A549 (cell line): ENCODE measurements at regions of chr5 and their contacts with region 1.

Region 1: GRCh38 chr5:73215891-73216610 is 43.1 kb downstream of the TMEM174 start:
- DNase-seq: peak; percentile 87 to 89
- ATAC-seq: peak; percentile 93 to 97
- H3K4me3 ChIP-seq: peak overlapping the region; percentile 47
- H3K27ac ChIP-seq: peak overlapping the region; percentile 91 to 96
- H3K4me1 ChIP-seq: peaks cover 16% of the 10 kb centered on the region; the same call in 2 of the 3 replicates
- CTCF ChIP-seq: peak; percentile 82
- EP300 ChIP-seq: no peak
- POLR2A ChIP-seq: peak; percentile 56
- RAD21 ChIP-seq: peak; percentile 60 to 79

Region 2: GRCh38 chr5:72752909-72753308 is 463.1 kb before region 1 on chr5:
- CTCF ChIA-PET with region 1: no interaction called
- POLR2A ChIA-PET with region 1: no interaction called
- DNase-seq: no peak
- ATAC-seq: peak in 1 of 2 experiments; percentile 56; a peak in 2 of 6 replicates
- H3K4me3 ChIP-seq: no peak overlapping the region
- H3K27ac ChIP-seq: no peak overlapping the region
- H3K4me1 ChIP-seq: no peaks in the 10 kb centered on the region
- CTCF ChIP-seq: no peak
- EP300 ChIP-seq: no peak
- POLR2A ChIP-seq: no peak
- RAD21 ChIP-seq: peak; percentile 21 to 34; a peak in 1 of 5 replicates

Region 3: DNA sequence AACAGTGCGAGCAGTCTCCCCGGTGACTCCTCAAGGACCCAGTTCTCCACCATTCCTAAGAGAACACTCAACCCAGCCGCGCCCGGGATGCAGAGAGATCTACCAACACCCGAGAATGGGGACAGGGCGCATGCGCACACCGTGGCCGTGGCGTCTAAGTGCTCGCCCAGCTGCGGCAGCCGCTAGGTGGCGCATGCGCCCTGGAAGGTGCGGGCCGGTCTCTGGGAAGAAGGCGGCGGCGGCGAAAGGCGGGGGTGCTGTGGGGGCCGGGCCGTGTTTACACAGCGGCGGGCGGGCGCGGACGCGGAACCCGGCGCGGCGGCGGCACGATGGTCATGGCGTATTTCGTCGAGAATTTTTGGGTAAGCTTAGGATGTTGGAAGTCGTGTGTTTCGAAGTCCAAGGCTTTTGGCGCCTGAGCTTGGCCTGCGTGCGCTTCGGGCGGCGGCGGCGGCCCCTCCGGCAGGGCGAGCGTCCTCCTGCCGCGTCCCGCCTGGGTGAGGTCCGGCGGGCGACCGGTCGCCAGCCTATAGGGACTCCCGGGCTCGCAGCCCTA is 260.2 kb before region 1 on chr5 and contains the start of gene FCHO2:
- CTCF ChIA-PET with region 1: interaction called, 13 read pairs
- POLR2A ChIA-PET with region 1: interaction called, 9 read pairs
- DNase-seq: peak; percentile 95 to 97
- ATAC-seq: peak; percentile 85 to 93
- H3K4me3 ChIP-seq: peak within 1 kb of the TSS; percentile 94
- H3K27ac ChIP-seq: peak within 1 kb of the TSS; percentile 96 to 97
- H3K4me1 ChIP-seq: peaks cover 49% of the 10 kb centered on the region
- CTCF ChIP-seq: peak; percentile 79
- EP300 ChIP-seq: no peak
- POLR2A ChIP-seq: peak; percentile 70
- RAD21 ChIP-seq: peak; percentile 62 to 73
- polyA plus RNA-seq, gene FCHO2: 14.9 and 20.2 TPM in 2 replicates

Region 4: GRCh38 chr5:73019766-73020165 is 196.3 kb before region 1 on chr5:
- CTCF ChIA-PET with region 1: no interaction called
- POLR2A ChIA-PET with region 1: no interaction called
- DNase-seq: no peak
- ATAC-seq: no peak
- H3K4me3 ChIP-seq: no peak overlapping the region
- H3K27ac ChIP-seq: no peak overlapping the region
- H3K4me1 ChIP-seq: no peaks in the 10 kb centered on the region
- CTCF ChIP-seq: no peak
- EP300 ChIP-seq: no peak
- POLR2A ChIP-seq: no peak
- RAD21 ChIP-seq: no peak

Region 5: GRCh38 chr5:73201547-73202513 is 14.2 kb before region 1 on chr5:
- CTCF ChIA-PET with region 1: interaction called, 33 read pairs
- POLR2A ChIA-PET with region 1: interaction called, 15 read pairs
- DNase-seq: peak; percentile 88 to 92
- ATAC-seq: peak; percentile 94 to 99
- H3K4me3 ChIP-seq: peak overlapping the region; percentile 42
- H3K27ac ChIP-seq: peak overlapping the region; percentile 58 to 80
- H3K4me1 ChIP-seq: 0 out of 3 replicates have a peak, but pooled peaks cover 3% of the 10 kb centered on the region
- CTCF ChIP-seq: peak; percentile 83
- EP300 ChIP-seq: no peak
- POLR2A ChIP-seq: peak; percentile 45
- RAD21 ChIP-seq: peak; percentile 84

Region 6: DNA sequence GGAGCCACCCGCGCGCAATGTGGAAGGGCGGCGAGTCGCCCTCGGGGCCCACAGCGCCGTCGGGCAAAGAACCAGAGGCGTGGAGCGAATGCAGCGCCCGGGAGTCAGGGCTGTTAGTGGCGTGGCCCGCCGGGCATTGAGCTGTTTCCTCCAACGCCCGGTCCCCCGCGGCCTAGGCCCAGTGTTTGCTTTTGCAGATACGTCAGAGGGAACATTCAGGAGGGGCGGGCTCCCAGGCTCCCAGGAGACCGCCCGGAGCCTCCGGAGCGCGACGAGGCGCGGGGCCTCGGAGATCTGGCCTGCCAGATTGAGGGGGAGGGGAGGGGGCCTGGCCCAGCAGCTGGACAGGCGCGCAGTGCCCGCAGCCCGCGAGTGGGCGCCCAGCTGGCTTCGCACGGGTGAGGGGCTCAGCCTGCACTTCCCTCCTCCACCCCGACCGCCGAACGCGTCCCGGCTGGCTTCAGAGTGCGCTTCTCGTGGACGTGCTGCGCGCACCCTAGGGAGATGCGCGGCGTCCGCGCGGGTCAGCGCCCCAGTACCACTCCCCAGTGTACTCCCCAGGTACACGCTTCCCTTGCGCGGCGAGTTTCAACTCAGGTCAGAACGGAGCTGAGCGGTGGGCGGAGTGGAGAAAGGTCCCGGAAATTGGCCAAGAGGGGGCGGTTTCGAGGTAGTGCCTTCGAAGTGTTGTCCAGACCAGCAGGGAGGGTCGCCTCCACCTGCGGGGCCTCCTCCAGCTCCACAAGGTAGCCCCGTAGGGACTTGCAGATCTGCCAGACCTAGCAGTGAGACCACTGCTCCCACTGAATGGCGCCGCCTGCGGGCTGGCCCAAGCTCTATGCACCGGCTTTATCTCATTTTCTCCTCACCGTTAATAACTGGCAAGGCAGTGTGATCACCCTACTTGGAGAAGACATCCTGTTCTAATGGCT is 87.4 kb after region 1 on chr5:
- CTCF ChIA-PET with region 1: interaction called, 32 read pairs
- POLR2A ChIA-PET with region 1: interaction called, 11 read pairs
- DNase-seq: peak; percentile 33 to 54
- ATAC-seq: peak; percentile 64 to 83
- H3K4me3 ChIP-seq: peak overlapping the region; percentile 47
- H3K27ac ChIP-seq: peak overlapping the region; percentile 59 to 86
- H3K4me1 ChIP-seq: no peaks in the 10 kb centered on the region
- CTCF ChIP-seq: peak; percentile 47
- EP300 ChIP-seq: no peak
- POLR2A ChIP-seq: no peak
- RAD21 ChIP-seq: peak; percentile 42 to 45; a peak in 4 of 5 replicates

Region 7: DNA sequence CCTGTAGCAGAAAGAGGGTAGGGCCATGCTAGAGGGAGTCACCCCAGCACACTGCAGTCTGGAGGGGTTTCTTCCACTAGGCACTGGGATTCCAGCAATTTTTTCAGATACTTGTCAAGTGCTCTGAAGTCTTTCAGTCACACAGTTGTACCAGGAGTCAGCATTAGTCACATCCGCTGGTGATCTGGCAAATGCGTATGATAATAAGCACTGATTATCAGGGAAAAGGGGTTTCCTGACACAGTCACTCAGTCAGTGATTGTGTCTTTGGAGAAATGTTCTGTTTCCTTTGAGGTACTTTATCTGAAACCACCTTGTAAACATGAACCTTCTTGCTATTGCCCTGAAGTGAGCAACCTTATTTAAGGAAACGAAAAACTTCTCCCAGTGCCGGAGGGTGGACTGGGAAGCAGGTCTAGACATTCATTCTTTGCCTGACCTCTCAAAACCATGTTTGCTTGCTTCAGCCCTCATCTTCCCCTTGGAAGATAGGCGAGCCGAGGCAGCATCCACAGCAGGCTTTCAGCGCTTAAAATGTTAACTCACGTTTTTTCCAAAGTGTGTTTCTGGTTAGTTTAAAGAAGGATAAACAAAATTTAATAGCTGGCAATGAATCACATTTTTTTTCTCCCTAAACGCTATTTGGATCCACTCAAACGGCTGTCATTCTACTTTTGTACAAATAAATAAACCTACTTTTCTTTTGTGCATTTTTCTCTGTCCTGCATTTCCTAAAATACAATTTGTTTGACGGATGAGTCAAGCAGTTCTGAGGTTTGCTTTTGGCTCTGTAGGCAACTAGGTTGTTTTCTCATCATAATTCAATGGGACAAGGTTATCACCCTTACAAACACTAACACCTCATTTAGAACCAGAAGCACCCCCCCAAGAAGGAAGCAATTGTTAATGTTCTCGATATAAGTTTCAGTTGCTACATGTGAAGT is 154.9 kb after region 1 on chr5:
- CTCF ChIA-PET with region 1: interaction called, 37 read pairs
- POLR2A ChIA-PET with region 1: no interaction called
- DNase-seq: peak; percentile 77 to 87
- ATAC-seq: peak; percentile 89 to 97
- H3K4me3 ChIP-seq: peak overlapping the region; percentile 7; the same call in 1 of the 3 replicates
- H3K27ac ChIP-seq: peak overlapping the region; percentile 67 to 83
- H3K4me1 ChIP-seq: peaks cover 29% of the 10 kb centered on the region
- CTCF ChIP-seq: no peak
- EP300 ChIP-seq: peak; percentile 19 to 53; a peak in 1 of 5 replicates
- POLR2A ChIP-seq: no peak
- RAD21 ChIP-seq: no peak

Region 8: DNA sequence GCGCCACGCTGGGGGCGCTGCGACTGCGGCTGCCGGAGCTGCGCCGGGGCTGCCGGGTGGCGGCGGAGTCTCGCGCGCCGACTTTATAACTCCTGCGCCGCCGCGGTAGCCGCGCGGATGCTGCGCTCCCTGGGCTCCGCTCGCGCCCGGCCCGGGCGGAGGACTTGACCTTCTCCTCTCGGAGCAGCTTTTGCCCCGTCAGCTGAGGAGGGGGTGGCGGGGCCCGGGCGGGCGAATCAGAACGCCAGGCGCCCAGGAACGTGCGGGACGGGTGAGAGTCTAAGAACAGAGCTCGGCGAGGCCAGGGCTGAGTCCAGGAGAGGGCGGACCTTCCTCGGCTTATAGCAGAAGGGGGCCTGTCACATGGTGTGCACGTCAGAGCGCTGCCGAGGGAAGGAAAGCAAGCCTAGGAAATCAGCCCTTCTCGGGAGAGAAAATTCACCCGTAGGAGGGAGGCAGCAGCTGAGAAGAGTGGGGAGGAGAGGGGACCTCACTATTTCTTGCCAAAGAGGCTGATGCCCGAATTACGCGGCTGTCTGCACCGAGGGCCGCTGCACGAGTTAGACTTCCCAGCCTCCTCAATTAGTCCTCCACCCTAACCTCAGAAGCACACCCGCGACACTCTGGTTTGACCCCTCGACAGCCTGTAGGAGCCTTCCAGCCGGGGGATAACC is 232.5 kb after region 1 on chr5 and contains the start of gene FOXD1:
- CTCF ChIA-PET with region 1: interaction called, 155 read pairs
- POLR2A ChIA-PET with region 1: interaction called, 86 read pairs
- DNase-seq: peak; percentile 77 to 95
- ATAC-seq: peak; percentile 78 to 94
- H3K4me3 ChIP-seq: peak within 1 kb of the TSS; percentile 67
- H3K27ac ChIP-seq: peak within 1 kb of the TSS; percentile 89 to 94
- H3K4me1 ChIP-seq: peaks cover 19% of the 10 kb centered on the region
- CTCF ChIP-seq: no peak
- EP300 ChIP-seq: no peak
- POLR2A ChIP-seq: peak; percentile 82
- RAD21 ChIP-seq: no peak
- polyA plus RNA-seq, gene FOXD1: 1.8 and 2.2 TPM in 2 replicates

Region 9: DNA sequence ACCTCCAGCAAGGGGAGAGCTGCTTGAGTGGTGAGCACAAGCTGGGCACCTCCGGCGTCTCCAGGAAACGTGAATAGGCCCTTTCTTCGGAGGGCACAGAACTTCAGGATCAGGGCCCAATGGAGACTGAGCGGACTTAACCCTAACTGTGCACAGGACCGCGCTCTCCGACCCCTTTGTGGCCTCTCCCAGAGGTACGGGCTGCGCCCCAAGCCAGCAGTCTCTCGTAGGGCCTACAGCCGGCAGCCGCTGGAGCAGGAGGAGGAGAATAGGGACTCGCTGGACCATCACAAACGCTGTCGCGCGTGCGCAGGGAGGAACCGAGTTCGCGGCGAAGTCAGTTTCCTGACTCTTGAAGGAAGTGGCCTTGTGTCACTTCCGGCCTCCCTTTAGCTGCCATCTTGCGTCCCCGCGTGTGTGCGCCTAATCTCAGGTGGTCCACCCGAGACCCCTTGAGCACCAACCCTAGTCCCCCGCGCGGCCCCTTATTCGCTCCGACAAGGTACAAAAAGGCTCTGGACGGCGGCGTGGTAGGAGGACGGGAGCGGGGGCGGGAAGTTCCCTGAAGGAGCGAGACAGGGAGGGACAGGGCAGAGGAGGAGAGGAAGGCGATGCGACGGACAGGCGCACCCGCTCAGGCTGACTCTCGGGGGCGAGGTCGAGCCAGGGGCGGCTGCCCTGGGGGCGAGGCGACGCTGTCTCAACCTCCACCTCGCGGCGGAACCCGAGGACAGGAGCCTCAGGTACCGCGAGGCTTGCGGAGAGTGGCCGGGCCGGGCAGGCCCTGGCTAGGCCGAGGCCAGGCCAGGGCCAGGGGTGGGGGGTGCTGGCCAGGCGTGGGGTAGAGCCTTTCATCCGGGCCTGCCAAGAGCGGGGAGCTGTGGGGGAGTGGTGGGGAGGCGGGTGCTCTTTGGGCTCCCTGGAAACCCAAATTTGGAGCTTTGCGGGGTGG is 282.3 kb after region 1 on chr5 and contains the start of gene BTF3:
- CTCF ChIA-PET with region 1: interaction called, 16 read pairs
- POLR2A ChIA-PET with region 1: interaction called, 6 read pairs
- DNase-seq: peak; percentile 96 to 99
- ATAC-seq: peak; percentile 97
- H3K4me3 ChIP-seq: peak within 1 kb of the TSS; percentile 64
- H3K27ac ChIP-seq: peak within 1 kb of the TSS; percentile 90 to 98
- H3K4me1 ChIP-seq: peaks cover 34% of the 10 kb centered on the region
- CTCF ChIP-seq: no peak
- EP300 ChIP-seq: no peak
- POLR2A ChIP-seq: peak; percentile 89
- RAD21 ChIP-seq: no peak
- polyA plus RNA-seq, gene BTF3: 905 and 1,048 TPM in 2 replicates